K562 (cell line): ENCODE measurements at regions of chr2 and their contacts with region 1.

Region 1: GRCh38 chr2:152200562-152201465 is 25.3 kb upstream of the STAM2 start:
- DNase-seq: peak; percentile 66 to 92 (median 78)
- ATAC-seq: peak; percentile 100
- H3K4me3 ChIP-seq: no peak overlapping the region
- H3K27ac ChIP-seq: no peak overlapping the region; the same call in 2 of the 3 replicates
- H3K4me1 ChIP-seq: peaks cover 2 to 3% of the 10 kb centered on the region in 2 experiments; a peak in 1 of 5 replicates
- H3K27me3 ChIP-seq: no peaks in the 10 kb centered on the region
- CTCF ChIP-seq: no peak
- EP300 ChIP-seq: no peak; the same call in 1 of the 2 replicates
- POLR2A ChIP-seq: no peak
- RAD21 ChIP-seq: peak in 1 of 2 experiments; percentile 23; a peak in 1 of 4 replicates

Region 2: GRCh38 chr2:151730262-151730975 is 470.4 kb before region 1 on chr2:
- CTCF ChIA-PET with region 1: no interaction called
- POLR2A ChIA-PET with region 1: no interaction called
- in situ Hi-C with region 1: no loop called
- intact Hi-C with region 1: no loop called
- DNase-seq: no peak
- ATAC-seq: no peak; the same call in 2 of the 3 replicates
- H3K4me3 ChIP-seq: no peak overlapping the region
- H3K27ac ChIP-seq: no peak overlapping the region
- H3K4me1 ChIP-seq: no peaks in the 10 kb centered on the region
- H3K27me3 ChIP-seq: no peaks in the 10 kb centered on the region
- CTCF ChIP-seq: no peak
- EP300 ChIP-seq: no peak
- POLR2A ChIP-seq: no peak
- RAD21 ChIP-seq: no peak

Region 3: GRCh38 chr2:152292991-152293390 is 92.2 kb after region 1 on chr2:
- CTCF ChIA-PET with region 1: no interaction called
- POLR2A ChIA-PET with region 1: no interaction called
- in situ Hi-C with region 1: loop called (anchors 5 kb)
- intact Hi-C with region 1: no loop called
- DNase-seq: no peak
- ATAC-seq: no peak
- H3K4me3 ChIP-seq: no peak overlapping the region
- H3K27ac ChIP-seq: no peak overlapping the region
- H3K4me1 ChIP-seq: no peaks in the 10 kb centered on the region
- H3K27me3 ChIP-seq: no peaks in the 10 kb centered on the region
- CTCF ChIP-seq: no peak
- EP300 ChIP-seq: no peak
- POLR2A ChIP-seq: no peak
- RAD21 ChIP-seq: no peak

Region 4: GRCh38 chr2:152611458-152612231 is 410.8 kb after region 1 on chr2:
- CTCF ChIA-PET with region 1: no interaction called
- POLR2A ChIA-PET with region 1: no interaction called
- in situ Hi-C with region 1: no loop called
- intact Hi-C with region 1: no loop called
- DNase-seq: no peak
- ATAC-seq: peak; percentile 47; the same call in 2 of the 3 replicates
- H3K4me3 ChIP-seq: no peak overlapping the region
- H3K27ac ChIP-seq: no peak overlapping the region
- H3K4me1 ChIP-seq: no peaks in the 10 kb centered on the region
- H3K27me3 ChIP-seq: peaks cover 13 to 14% of the 10 kb centered on the region in 2 experiments; a peak in 4 of 5 replicates
- CTCF ChIP-seq: no peak
- EP300 ChIP-seq: no peak
- POLR2A ChIP-seq: no peak
- RAD21 ChIP-seq: no peak